B cell (primary cell): ENCODE measurements at regions of chr9 and their contacts with region 1.

Region 1: DNA sequence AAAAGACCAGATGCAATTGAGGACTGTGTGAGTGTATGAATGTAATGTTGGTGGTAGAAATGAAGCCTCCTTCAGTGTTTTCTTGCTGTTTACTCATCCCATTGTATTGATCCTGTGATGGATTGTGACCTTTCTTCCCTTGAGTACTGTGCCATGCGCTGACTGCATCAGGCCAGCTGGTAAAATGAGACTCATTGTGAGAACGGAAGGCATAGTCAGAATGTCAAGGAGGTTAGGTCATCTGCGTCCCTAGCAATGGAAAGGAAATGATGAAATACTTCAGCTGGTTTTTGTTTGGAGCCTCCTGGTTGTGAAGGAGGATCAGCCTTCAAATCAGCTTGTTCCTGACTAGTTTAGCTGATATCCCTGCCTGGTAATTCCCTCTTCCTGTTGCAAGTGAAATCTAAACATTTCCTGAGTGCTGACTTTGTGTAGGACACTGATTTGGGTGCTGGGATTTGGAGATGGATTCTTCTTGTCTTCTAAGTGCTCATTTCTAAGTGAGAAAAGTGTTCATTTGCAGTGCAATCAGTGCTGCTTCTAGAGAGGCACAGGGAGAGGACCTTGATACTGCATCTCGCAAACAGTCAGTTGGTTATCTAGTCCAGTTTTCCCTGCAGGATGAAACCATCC is 35.5 kb downstream of the TNFSF8 start:
- DNase-seq: no peak
- ATAC-seq: no peak
- H3K4me3 ChIP-seq: no peak overlapping the region
- H3K4me3 Mint-ChIP-seq: peak overlapping the region; percentile 32
- H3K27ac ChIP-seq: no peak overlapping the region
- H3K27ac Mint-ChIP-seq: peak overlapping the region; percentile 78
- H3K4me1 ChIP-seq: peaks cover 65 to 68% of the 10 kb centered on the region in 2 donors
- H3K4me1 Mint-ChIP-seq: peaks cover 48% of the 10 kb centered on the region
- H3K27me3 ChIP-seq: no peaks in the 10 kb centered on the region
- H3K27me3 Mint-ChIP-seq: no peaks in the 10 kb centered on the region
- CTCF ChIP-seq: no peak

Region 2: GRCh38 chr9:114930056-114930812 is 35.3 kb after region 1 on chr9 and contains the start of gene TNFSF8:
- CTCF ChIA-PET with region 1: no interaction called
- POLR2A ChIA-PET with region 1: interaction called, 5 read pairs
- intact Hi-C with region 1: loop called (anchors 5 kb)
- DNase-seq: peak; percentile 82
- ATAC-seq: peak; percentile 67
- H3K4me3 ChIP-seq: peak within 1 kb of the TSS; percentile 47 to 94 (median 69)
- H3K4me3 Mint-ChIP-seq: peak within 1 kb of the TSS; percentile 83
- H3K27ac ChIP-seq: peak within 1 kb of the TSS; percentile 68 to 77
- H3K27ac Mint-ChIP-seq: peak within 1 kb of the TSS; percentile 84
- H3K4me1 ChIP-seq: peaks cover 37 to 38% of the 10 kb centered on the region in 2 donors
- H3K4me1 Mint-ChIP-seq: peaks cover 43% of the 10 kb centered on the region
- H3K27me3 ChIP-seq: peaks cover 0 to 2% (median under 1%) of the 10 kb centered on the region in 4 experiments
- H3K27me3 Mint-ChIP-seq: peaks cover 15% of the 10 kb centered on the region
- CTCF ChIP-seq: no peak
- total RNA-seq, gene TNFSF8: 1.6 and 1.9 TPM in 2 replicates